GM10248 (cell line): ENCODE measurements at regions of chr7 and their contacts with region 1.

Region 1: DNA sequence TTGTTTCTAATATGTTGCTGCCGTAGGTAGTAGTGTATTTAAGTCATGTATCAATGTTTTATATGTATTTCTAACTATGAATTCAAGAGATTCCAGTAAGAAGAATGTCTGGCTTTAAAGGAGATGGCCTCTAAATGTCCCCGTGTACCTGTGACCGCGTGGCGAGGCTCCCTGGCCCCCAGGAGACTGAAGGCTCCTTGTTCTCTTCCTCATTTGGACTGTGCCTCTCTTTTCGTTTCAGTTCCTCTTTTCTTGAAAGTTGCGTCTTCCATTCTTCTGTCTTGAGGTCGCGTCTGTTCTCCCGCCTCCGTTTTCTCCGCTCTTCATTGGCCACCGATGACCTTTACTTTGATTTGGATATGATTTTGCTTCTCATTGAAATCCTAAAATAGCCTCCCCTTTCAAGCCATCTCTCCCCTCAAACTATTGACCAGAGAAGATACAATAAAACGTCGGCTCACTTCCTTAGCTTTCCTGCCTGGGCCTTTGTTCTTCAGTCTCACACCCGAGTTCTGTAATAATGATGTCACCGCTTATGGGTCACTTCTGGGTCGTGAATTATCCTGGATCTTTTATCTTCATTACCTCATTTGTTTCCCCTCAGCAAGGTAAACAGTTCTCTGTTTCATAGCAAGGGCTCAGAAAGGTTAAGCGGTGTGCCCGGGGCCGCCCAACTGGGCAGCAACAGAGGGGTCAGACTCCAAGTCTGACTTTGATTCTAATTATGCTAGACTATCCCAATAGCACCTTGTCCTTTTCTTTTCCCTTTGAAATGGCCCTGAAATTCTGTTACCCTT is 28.7 kb downstream of the WIPI2 start:
- DNase-seq: peak; percentile 89
- CTCF ChIP-seq: no peak

Region 2: DNA sequence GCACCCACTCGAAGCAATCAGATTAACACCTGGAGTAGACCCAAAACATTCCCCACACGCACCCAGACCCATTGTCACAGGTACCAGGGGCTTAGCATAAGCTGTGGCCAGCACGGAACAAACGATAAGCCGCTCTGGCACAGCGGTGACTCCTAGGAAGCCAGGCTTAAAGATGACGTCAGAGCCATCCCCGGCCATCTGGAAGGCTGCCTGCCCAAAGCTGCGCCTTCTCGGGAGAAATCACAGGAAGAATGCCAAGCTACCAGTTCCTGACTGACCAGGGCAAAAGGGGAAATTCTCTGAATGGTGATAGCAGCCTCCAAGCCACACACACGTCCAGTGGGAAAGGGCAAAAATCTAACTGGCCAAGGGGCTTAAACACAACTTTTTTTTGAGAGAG is 41.7 kb before region 1 on chr7:
- CTCF ChIA-PET with region 1: no interaction called
- POLR2A ChIA-PET with region 1: no interaction called
- DNase-seq: no peak
- CTCF ChIP-seq: no peak

Region 3: DNA sequence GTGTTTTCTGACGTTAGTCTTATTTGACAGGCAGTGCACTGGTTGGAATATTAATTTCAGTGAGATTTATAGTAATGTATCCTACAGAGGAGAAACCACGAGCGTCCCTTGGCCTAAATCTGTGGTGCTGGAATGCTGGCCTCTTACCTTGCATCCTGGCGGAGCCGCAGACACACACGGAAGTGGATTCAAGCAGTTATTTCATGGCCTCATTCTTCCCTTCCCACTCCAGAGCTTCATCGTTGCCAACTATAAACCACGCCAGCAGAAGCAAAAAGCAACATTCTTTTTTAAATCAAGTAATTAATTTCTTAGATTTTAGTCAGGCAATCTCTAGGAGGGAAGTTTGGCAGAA is 15.6 kb before region 1 on chr7:
- CTCF ChIA-PET with region 1: interaction called, 14 read pairs
- POLR2A ChIA-PET with region 1: interaction called, 3 read pairs
- DNase-seq: no peak
- CTCF ChIP-seq: no peak

Region 4: DNA sequence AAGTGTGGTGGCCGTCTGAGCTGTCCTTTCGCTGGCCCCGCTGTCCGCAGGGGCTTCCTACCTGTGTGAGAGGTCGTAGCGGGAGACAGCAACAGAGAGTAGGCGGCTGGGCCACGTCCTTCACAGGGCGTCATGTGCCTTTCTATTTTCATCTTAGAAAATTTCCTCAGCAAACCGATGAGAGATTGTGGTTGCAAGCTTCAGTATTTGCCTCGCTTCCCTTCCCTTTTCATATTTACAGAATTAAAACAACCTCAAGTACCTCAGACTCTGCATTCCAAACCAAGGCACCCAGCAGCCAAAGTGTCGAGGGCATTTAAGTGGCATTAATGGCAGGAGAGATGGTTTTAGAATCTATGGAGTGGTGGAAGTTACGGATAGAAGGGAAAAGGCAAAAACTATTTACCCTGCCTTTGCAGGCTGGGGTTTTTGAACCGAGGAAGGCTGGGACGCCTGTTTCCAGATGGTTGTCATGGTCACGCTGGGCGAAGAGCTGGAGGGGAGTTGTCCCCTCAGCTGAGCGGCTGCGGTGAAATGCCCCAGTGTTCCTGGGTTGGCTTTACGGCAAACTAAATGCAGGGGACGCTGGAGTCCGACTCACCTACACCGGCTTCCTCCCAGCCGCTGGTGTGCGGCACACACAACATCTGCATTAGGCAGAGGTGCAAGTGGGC is 13.2 kb after region 1 on chr7:
- CTCF ChIA-PET with region 1: interaction called, 20 read pairs
- POLR2A ChIA-PET with region 1: interaction called, 6 read pairs
- DNase-seq: peak; percentile 79
- CTCF ChIP-seq: peak; percentile 3

Region 5: DNA sequence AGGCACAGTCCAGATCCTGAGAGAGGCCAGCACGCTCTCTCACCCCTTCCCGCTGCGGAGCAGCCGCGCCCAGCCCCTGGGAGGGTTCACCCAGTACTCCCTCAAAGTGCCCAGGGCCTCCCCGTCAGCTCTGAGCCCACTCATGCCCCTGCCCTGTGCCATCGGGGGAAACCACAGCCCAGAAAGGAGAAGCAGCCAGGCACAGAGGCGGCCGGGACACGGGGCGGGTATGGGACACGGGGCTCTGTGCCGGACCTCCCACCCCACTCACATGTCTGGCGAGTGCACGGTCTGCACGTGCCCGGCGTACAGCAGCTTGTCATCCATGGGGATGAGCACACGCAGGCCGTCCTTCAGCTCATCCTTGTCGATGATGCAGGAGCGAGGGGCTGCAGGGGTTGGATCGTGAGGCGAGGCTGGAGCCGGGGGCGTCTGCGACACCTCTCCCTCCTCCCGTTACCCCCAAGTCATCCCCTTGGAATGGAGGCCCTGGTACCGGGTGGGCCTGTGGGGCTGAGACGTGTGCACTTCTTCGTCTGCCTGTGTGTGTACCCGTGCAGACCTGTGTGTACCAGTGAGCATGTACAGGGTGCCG is 102.1 kb after region 1 on chr7:
- CTCF ChIA-PET with region 1: no interaction called
- POLR2A ChIA-PET with region 1: no interaction called
- DNase-seq: no peak
- CTCF ChIP-seq: no peak